T-cell (primary cell): ENCODE measurements at regions of chr2 and their contacts with region 1.

Region 1: GRCh38 chr2:219206442-219207253 is at the start of gene ZFAND2B:
- DNase-seq: peak; percentile 87 to 97 (median 93)
- ATAC-seq: peak; percentile 92 to 96 (median 94)
- H3K4me3 ChIP-seq: peak within 1 kb of the TSS; percentile 70 to 80
- H3K4me3 Mint-ChIP-seq: peak within 1 kb of the TSS; percentile 84 to 90 (median 86)
- H3K27ac ChIP-seq: peak within 1 kb of the TSS; percentile 86
- H3K27ac Mint-ChIP-seq: peak within 1 kb of the TSS; percentile 95 to 99
- H3K4me1 ChIP-seq: peaks cover 14 to 54% of the 10 kb centered on the region in 2 experiments
- H3K4me1 Mint-ChIP-seq: peaks cover 45 to 49% (median 47%) of the 10 kb centered on the region in 3 donors
- H3K27me3 ChIP-seq: no peaks in the 10 kb centered on the region
- H3K27me3 Mint-ChIP-seq: no peaks in the 10 kb centered on the region
- total RNA-seq, gene ZFAND2B: 61.7 to 91.6 (median 85.6) TPM

Region 2: GRCh38 chr2:219160186-219161017 is 46.2 kb before region 1 on chr2 and contains the start of gene NHEJ1:
- CTCF ChIA-PET with region 1: interaction called, 14 to 39 read pairs
- POLR2A ChIA-PET with region 1: interaction called, 5 read pairs
- DNase-seq: peak; percentile 74 to 95 (median 86)
- ATAC-seq: peak; percentile 85 to 93 (median 86)
- H3K4me3 ChIP-seq: peak within 1 kb of the TSS; percentile 65 to 85
- H3K4me3 Mint-ChIP-seq: peak within 1 kb of the TSS; percentile 86 to 94 (median 88)
- H3K27ac ChIP-seq: peak within 1 kb of the TSS; percentile 68
- H3K27ac Mint-ChIP-seq: peak within 1 kb of the TSS; percentile 95 to 97
- H3K4me1 ChIP-seq: peaks cover 4 to 14% of the 10 kb centered on the region in 2 experiments
- H3K4me1 Mint-ChIP-seq: peaks cover 16 to 31% (median 22%) of the 10 kb centered on the region in 3 donors
- H3K27me3 ChIP-seq: no peaks in the 10 kb centered on the region
- H3K27me3 Mint-ChIP-seq: no peaks in the 10 kb centered on the region
- total RNA-seq, gene NHEJ1: 17.3 to 21.1 (median 18.2) TPM

Region 3: GRCh38 chr2:219171231-219171651 is 35.4 kb before region 1 on chr2:
- CTCF ChIA-PET with region 1: interaction called, 5 to 32 read pairs
- POLR2A ChIA-PET with region 1: interaction called, 5 to 9 read pairs
- DNase-seq: peak in 16 of 35 experiments; percentile 12 to 69 (median 23)
- ATAC-seq: peak in 3 of 4 experiments; percentile 56 to 77 (median 69)
- H3K4me3 ChIP-seq: no peak overlapping the region
- H3K4me3 Mint-ChIP-seq: no peak overlapping the region
- H3K27ac ChIP-seq: peak overlapping the region; percentile 24
- H3K27ac Mint-ChIP-seq: peak overlapping the region; percentile 9 to 34
- H3K4me1 ChIP-seq: peaks cover 12 to 36% of the 10 kb centered on the region in 2 experiments
- H3K4me1 Mint-ChIP-seq: peaks cover 25 to 45% (median 34%) of the 10 kb centered on the region in 3 donors
- H3K27me3 ChIP-seq: no peaks in the 10 kb centered on the region
- H3K27me3 Mint-ChIP-seq: no peaks in the 10 kb centered on the region

Region 4: GRCh38 chr2:219176818-219177551 is 29.7 kb before region 1 on chr2 and contains the start of gene CNPPD1:
- CTCF ChIA-PET with region 1: interaction called, 5 to 32 read pairs
- POLR2A ChIA-PET with region 1: interaction called, 5 to 9 read pairs
- DNase-seq: peak; percentile 76 to 93 (median 85)
- ATAC-seq: peak; percentile 77 to 81 (median 79)
- H3K4me3 ChIP-seq: peak within 1 kb of the TSS; percentile 60 to 92
- H3K4me3 Mint-ChIP-seq: peak within 1 kb of the TSS; percentile 88 to 96 (median 92)
- H3K27ac ChIP-seq: peak within 1 kb of the TSS; percentile 88
- H3K27ac Mint-ChIP-seq: peak within 1 kb of the TSS; percentile 99
- H3K4me1 ChIP-seq: peaks cover 23 to 73% of the 10 kb centered on the region in 2 experiments
- H3K4me1 Mint-ChIP-seq: peaks cover 70 to 77% (median 70%) of the 10 kb centered on the region in 3 donors
- H3K27me3 ChIP-seq: no peaks in the 10 kb centered on the region
- H3K27me3 Mint-ChIP-seq: no peaks in the 10 kb centered on the region
- total RNA-seq, gene CNPPD1: 49.2 to 89.5 (median 83.2) TPM